Naive thymus-derived CD8-positive, alpha-beta T cell (primary cell): ENCODE measurements at regions of chrX and their contacts with region 1.

Region 1: GRCh38 chrX:55451990-55452832 is at the start of gene MAGEH1:
- DNase-seq: peak; percentile 59 to 90 (median 81)
- ATAC-seq: peak; percentile 90 to 92
- H3K4me3 Mint-ChIP-seq: peak within 1 kb of the TSS; percentile 90 to 96 (median 94)
- H3K27ac Mint-ChIP-seq: peak within 1 kb of the TSS; percentile 92 to 98 (median 96)
- H3K4me1 Mint-ChIP-seq: peaks cover 5 to 27% (median 17%) of the 10 kb centered on the region in 4 donors
- H3K27me3 Mint-ChIP-seq: no peaks in the 10 kb centered on the region
- polyA plus RNA-seq, gene MAGEH1: 27.4 to 45.1 (median 37.0) TPM

Region 2: GRCh38 chrX:55488593-55489313 is 36.5 kb after region 1 on chrX:
- POLR2A ChIA-PET with region 1: interaction called, 42 read pairs
- DNase-seq: peak; percentile 51 to 82 (median 68)
- ATAC-seq: peak; percentile 74 to 80
- H3K4me3 Mint-ChIP-seq: peak overlapping the region; percentile 90 to 98 (median 94)
- H3K27ac Mint-ChIP-seq: peak overlapping the region; percentile 93 to 99 (median 98)
- H3K4me1 Mint-ChIP-seq: peaks cover 7 to 27% (median 16%) of the 10 kb centered on the region in 4 donors
- H3K27me3 Mint-ChIP-seq: no peaks in the 10 kb centered on the region